ENCODE measurements at regions of chr11 and their contacts with region 1.

Region 1: DNA sequence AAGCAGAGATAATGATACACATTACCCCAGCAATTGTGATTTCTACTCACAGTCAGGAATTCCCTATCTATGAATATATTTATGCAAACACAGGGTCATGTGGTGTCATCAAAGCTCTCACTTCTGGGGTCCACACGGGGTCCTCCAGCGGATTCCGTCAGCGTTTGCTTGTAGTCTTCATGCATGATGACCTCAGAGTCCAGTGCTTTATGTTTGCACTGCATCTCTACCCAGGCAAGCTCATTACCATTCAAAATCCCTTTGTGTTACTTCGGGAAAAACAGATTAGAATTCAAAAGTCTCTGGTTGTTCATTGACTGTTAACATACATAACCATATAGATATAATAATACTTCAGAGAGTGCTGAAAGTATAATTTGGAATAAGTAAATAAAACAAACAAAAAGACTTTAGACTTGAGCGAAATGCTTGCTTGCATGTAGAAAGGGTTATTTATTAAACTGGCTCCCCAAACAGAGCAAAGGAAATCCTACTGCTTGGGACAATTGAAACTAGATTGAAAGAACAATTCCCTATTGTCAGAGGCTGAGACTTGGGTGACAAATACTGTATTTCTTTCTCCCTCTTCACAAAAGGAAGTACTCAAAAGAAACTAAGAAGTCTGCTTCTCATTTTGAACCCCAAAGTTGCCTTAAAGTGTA is 423.1 kb downstream of the ETS1 start:
- DNase-seq: no peak
- H3K4me3 ChIP-seq: no peak overlapping the region
- H3K27ac ChIP-seq: no peak overlapping the region
- H3K4me1 ChIP-seq: no peaks in the 10 kb centered on the region
- H3K27me3 ChIP-seq: no peaks in the 10 kb centered on the region
- CTCF ChIP-seq: no peak
- EP300 ChIP-seq: no peak
- POLR2A ChIP-seq: no peak

Region 2: DNA sequence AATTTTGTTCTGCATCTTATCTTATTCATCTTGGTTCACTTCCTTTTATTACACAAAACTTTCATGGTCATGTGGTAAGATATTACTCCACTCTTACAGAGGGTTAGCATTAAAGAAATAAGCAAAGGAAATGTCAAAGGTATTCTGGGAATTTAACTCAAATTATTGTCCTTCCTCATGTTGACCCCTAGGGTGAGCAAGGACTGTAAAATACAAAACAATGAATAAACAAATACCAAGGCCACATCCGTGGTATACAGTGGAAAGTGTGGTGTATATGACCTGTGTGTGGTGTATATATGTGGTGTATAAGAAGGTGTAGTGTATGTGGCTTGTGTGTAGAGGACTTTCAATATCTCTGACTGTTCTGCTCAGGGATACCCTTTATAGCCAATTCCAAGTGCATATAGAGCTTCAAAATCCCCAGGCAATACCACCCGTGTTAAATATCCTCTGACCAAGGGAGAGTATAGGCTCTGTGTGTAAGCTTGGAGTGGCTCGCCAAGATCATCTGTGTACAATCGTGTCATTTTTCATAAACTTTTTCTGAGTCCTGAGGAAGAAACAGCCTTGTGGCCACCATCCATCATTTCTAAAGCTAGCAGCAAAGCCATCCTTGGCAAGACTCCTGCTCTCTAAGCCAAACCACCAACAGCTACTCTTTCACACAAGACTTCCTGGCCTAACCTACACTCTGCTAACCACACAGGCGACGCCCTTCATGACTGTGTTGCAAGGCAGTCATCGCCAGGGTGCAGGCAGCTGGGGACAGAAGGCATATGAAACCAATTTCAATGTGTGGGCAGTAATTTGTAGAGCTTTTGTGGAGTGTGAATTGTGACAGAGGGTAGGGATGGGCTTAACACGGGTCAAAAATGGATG is 124.8 kb before region 1 on chr11:
- intact Hi-C with region 1: loop called (anchors 10 kb)
- DNase-seq: no peak
- H3K4me3 ChIP-seq: no peak overlapping the region
- H3K27ac ChIP-seq: no peak overlapping the region
- H3K4me1 ChIP-seq: no peaks in the 10 kb centered on the region
- H3K27me3 ChIP-seq: no peaks in the 10 kb centered on the region
- CTCF ChIP-seq: no peak
- EP300 ChIP-seq: no peak
- POLR2A ChIP-seq: no peak

Measured in sigmoid colon (tissue), 7 donors.